ENCODE measurements at regions of chr2 and their contacts with region 1.

Region 1: GRCh38 chr2:172518995-172519394 is 36.9 kb upstream of the PDK1 start:
- DNase-seq: no peak
- ATAC-seq: no peak
- H3K4me3 Mint-ChIP-seq: no peak overlapping the region
- H3K27ac Mint-ChIP-seq: no peak overlapping the region
- H3K4me1 Mint-ChIP-seq: peaks cover 7% of the 10 kb centered on the region
- H3K27me3 Mint-ChIP-seq: no peaks in the 10 kb centered on the region
- CTCF ChIP-seq: no peak

Region 2: GRCh38 chr2:172119089-172119488 is 399.9 kb before region 1 on chr2:
- CTCF ChIA-PET with region 1: no interaction called
- POLR2A ChIA-PET with region 1: interaction called, 14 read pairs
- intact Hi-C with region 1: no loop called
- DNase-seq: no peak
- ATAC-seq: no peak
- H3K4me3 Mint-ChIP-seq: no peak overlapping the region
- H3K27ac Mint-ChIP-seq: no peak overlapping the region
- H3K4me1 Mint-ChIP-seq: no peaks in the 10 kb centered on the region
- H3K27me3 Mint-ChIP-seq: peaks cover 15% of the 10 kb centered on the region
- CTCF ChIP-seq: no peak

Region 3: GRCh38 chr2:172792698-172793097 is 273.7 kb after region 1 on chr2:
- CTCF ChIA-PET with region 1: no interaction called
- POLR2A ChIA-PET with region 1: no interaction called
- intact Hi-C with region 1: no loop called
- DNase-seq: no peak
- ATAC-seq: no peak
- H3K4me3 Mint-ChIP-seq: no peak overlapping the region
- H3K27ac Mint-ChIP-seq: no peak overlapping the region
- H3K4me1 Mint-ChIP-seq: no peaks in the 10 kb centered on the region
- H3K27me3 Mint-ChIP-seq: peaks cover 9% of the 10 kb centered on the region
- CTCF ChIP-seq: no peak

Measured in activated B cell treated with CpG ODN at 0.5 μM for 24 hours (primary cell).